A673 (cell line): ENCODE measurements at regions of chr21 and their contacts with region 1.

Region 1: GRCh38 chr21:32994305-32994704 is 31.4 kb upstream of the OLIG2 start:
- DNase-seq: peak; percentile 4
- H3K4me3 ChIP-seq: no peak overlapping the region
- H3K27ac ChIP-seq: no peak overlapping the region
- H3K4me1 ChIP-seq: no peaks in the 10 kb centered on the region
- H3K27me3 ChIP-seq: peaks cover 67% of the 10 kb centered on the region
- CTCF ChIP-seq: peak; percentile 52

Region 2: GRCh38 chr21:33019885-33020557 is 25.7 kb after region 1 on chr21:
- CTCF ChIA-PET with region 1: interaction called, 11 read pairs
- POLR2A ChIA-PET with region 1: no interaction called
- intact Hi-C with region 1: no loop called
- DNase-seq: no peak
- H3K4me3 ChIP-seq: no peak overlapping the region
- H3K27ac ChIP-seq: no peak overlapping the region
- H3K4me1 ChIP-seq: no peaks in the 10 kb centered on the region
- H3K27me3 ChIP-seq: peaks cover 99% of the 10 kb centered on the region
- CTCF ChIP-seq: no peak

Region 3: GRCh38 chr21:33441489-33442477 is 447.5 kb after region 1 on chr21:
- CTCF ChIA-PET with region 1: no interaction called
- POLR2A ChIA-PET with region 1: no interaction called
- intact Hi-C with region 1: loop called (anchors 10 kb)
- DNase-seq: peak; percentile 91
- H3K4me3 ChIP-seq: no peak overlapping the region
- H3K27ac ChIP-seq: no peak overlapping the region
- H3K4me1 ChIP-seq: peaks cover 11% of the 10 kb centered on the region
- H3K27me3 ChIP-seq: no peaks in the 10 kb centered on the region
- CTCF ChIP-seq: no peak